ENCODE measurements at regions of chr2 and their contacts with region 1.

Region 1: DNA sequence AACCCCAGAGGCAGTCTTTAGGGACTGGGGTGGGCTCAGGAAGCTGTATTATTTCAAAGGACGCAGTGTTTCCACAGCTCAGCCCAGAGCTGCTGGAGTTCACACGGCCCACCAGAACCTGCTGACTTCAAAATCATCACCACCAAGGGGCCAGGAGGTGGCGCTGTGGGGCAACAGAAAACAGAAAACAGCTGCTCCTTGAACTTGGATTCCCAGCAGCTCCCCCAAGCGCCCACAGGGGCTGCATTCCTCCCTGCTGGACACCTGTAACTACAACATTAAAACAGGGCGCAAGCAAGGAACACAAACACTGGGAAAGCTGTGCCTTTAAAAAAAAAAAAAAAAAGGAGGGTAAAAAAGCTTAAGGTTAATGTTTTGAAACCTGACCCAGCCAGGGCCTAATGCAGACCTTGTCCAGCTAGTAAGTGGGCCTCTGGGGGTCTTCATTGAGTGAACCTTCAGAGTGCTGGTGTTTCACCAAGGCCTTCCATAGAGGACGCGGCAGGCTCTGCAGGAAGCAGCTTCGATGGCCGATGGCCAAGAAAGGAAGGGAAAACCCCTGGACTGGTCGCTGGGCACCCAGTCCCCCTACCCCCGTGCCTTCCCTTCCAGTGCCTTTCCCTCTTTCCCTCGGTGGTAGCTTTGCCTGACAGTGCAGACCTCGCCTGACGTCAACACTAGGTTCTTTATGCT is 25.9 kb downstream of the MLPH start:
- DNase-seq: peak; percentile 28
- ATAC-seq: peak; percentile 97
- H3K4me3 ChIP-seq: no peak overlapping the region
- H3K27ac ChIP-seq: no peak overlapping the region
- H3K4me1 ChIP-seq: no peaks in the 10 kb centered on the region
- H3K27me3 ChIP-seq: peaks cover 0 to 2% of the 10 kb centered on the region in 2 experiments; a peak in 2 of 4 replicates
- CTCF ChIP-seq: peak; percentile 85 to 99 (median 88); a peak in 5 of 6 replicates
- EP300 ChIP-seq: no peak
- POLR2A ChIP-seq: no peak
- RAD21 ChIP-seq: peak; percentile 96

Region 2: DNA sequence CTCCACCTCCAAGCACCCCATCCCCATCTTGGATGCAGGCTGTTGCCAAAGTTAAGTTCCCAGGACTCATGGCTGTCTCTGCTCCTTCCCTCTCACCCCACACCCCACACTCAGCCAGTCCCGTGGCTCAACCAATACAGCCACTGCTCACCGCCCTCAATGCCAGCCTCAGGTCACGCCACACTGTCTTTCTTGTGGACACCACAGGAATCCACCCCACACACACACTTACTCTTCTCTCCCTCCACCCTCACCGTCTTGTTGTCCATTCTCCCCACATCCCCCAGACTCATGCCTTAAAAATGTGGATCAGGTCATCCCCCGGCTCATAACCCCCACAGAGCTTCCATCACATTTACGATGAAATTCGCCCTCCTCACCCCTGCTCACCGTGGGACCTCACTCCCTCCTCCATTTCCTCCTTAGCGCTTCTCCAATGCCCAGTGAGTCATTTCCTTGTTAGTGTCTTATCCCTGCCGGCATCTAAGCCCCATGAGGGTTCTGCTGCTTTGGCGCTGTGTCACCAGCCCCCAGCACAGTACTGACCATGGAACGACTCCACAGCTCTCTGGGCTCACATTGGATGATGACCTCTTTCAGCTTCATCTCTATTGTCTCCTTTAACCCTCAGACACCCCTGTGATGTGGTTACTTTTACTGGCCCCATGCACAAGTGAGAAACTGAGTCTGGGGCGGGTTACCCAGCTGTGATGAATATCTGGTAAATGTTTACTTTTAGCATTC is 12.1 kb before region 1 on chr2:
- CTCF ChIA-PET with region 1: interaction called, 11 read pairs
- POLR2A ChIA-PET with region 1: interaction called, 3 read pairs
- RAD21 ChIA-PET with region 1: interaction called, 5 read pairs
- SMC1A ChIA-PET with region 1: interaction called, 4 read pairs
- in situ Hi-C with region 1: no loop called
- intact Hi-C with region 1: no loop called
- DNase-seq: no peak
- ATAC-seq: no peak
- H3K4me3 ChIP-seq: no peak overlapping the region
- H3K27ac ChIP-seq: no peak overlapping the region
- H3K4me1 ChIP-seq: no peaks in the 10 kb centered on the region
- H3K27me3 ChIP-seq: peaks cover 2 to 3% of the 10 kb centered on the region in 2 experiments; a peak in 3 of 4 replicates
- CTCF ChIP-seq: no peak
- EP300 ChIP-seq: no peak
- POLR2A ChIP-seq: no peak
- RAD21 ChIP-seq: no peak

Region 3: DNA sequence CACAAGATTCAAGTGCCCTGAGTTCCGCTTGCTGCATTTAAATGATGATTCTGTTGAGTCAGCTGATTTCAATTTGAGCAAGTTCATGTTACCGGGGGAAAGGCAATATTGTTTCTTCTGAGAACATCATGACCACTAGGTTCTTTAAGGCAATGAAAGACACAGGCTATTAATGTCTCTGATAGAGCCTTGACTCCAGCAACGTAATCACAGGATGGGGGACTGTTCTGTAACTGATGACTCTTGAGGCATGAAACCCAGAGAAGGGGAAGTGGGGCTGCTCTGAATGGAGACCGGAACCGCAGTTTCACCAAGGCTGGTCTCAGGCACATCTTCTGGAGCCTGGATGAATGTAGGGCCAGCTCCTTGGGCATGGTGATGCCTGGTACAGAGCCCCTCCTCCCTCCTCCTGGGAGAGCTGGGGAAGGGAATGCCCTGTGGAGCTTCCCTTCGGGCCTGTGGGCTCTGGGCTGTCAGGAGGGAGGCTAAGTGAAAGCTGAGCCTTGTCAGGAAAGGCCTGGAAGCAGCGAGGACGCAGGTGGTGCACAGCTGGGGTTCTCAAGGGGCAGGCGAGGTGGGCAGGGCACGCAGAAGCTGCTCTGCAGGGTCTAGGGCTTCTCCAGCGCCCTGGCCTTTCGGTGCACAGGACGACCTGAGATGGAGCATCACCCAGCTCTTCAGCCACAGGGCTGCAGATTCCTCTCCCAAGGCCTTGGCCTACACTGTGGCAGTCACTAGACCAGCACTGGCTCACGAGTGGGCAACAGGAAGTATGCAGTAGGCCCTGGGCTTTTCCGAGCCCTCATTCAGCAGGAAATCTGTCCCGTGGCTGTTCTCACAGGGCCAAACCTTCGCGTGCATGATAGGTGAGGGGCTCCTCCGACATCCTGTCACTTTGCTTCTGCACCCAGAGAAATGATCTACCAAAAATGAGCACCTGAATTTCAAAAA is 16.8 kb after region 1 on chr2:
- CTCF ChIA-PET with region 1: interaction called, 14 read pairs
- POLR2A ChIA-PET with region 1: interaction called, 3 read pairs
- RAD21 ChIA-PET with region 1: interaction called, 8 read pairs
- SMC1A ChIA-PET with region 1: interaction called, 14 read pairs
- in situ Hi-C with region 1: no loop called
- intact Hi-C with region 1: no loop called
- DNase-seq: peak; percentile 73
- ATAC-seq: peak; percentile 98
- H3K4me3 ChIP-seq: no peak overlapping the region
- H3K27ac ChIP-seq: 0 out of 2 replicates have a peak overlapping the region, but pooled peaks have one; percentile 13
- H3K4me1 ChIP-seq: peaks cover 21% of the 10 kb centered on the region
- H3K27me3 ChIP-seq: no peaks in the 10 kb centered on the region
- CTCF ChIP-seq: no peak
- EP300 ChIP-seq: peak in 1 of 2 experiments; percentile 37; a peak in 1 of 4 replicates
- POLR2A ChIP-seq: no peak
- RAD21 ChIP-seq: no peak

Region 4: DNA sequence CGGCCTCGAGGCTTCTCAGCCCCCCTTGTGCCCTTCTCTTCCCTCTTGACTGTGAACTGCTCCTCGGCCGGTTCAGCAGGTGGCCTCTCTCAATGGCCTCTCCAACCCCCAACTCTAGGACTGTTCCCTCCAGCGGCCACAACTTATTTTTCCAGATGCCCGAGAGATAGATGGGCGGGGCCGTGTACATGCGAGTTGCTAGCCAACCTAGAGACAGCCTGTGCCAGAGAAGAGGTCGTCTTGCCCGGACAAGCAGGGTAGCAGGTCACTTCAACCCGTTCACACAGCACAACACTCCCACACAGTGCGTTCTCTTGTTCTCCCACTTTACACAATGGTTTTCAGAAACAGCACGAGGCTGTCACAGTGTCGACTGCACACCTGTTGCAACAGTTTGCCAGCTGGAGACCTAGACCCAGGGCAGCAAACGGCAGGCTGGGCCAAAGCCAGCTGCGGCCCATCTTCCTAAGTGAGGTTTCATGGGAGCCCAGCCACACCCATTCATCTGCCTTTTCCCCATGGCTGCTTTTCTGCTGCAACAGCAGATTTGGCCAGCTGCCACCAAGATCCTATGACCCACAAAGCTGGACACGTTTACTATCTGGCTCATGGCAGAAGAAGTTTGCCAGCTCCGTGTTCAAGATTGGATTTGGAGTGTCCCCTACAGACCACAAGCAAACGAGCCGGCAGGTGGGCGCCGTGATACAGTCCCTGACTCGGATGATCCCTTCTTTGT is 46.2 kb after region 1 on chr2:
- CTCF ChIA-PET with region 1: interaction called, 35 read pairs
- POLR2A ChIA-PET with region 1: no interaction called
- RAD21 ChIA-PET with region 1: interaction called, 17 read pairs
- SMC1A ChIA-PET with region 1: interaction called, 21 read pairs
- in situ Hi-C with region 1: no loop called
- intact Hi-C with region 1: loop called (anchors 5 kb)
- DNase-seq: no peak
- ATAC-seq: no peak
- H3K4me3 ChIP-seq: no peak overlapping the region
- H3K27ac ChIP-seq: no peak overlapping the region
- H3K4me1 ChIP-seq: peaks cover 19% of the 10 kb centered on the region
- H3K27me3 ChIP-seq: no peaks in the 10 kb centered on the region
- CTCF ChIP-seq: no peak
- EP300 ChIP-seq: no peak
- POLR2A ChIP-seq: no peak
- RAD21 ChIP-seq: no peak

Region 5: GRCh38 chr2:237674731-237675276 is 161.9 kb after region 1 on chr2:
- CTCF ChIA-PET with region 1: interaction called, 10 read pairs
- POLR2A ChIA-PET with region 1: interaction called, 4 read pairs
- RAD21 ChIA-PET with region 1: interaction called, 3 read pairs
- SMC1A ChIA-PET with region 1: interaction called, 7 read pairs
- in situ Hi-C with region 1: no loop called
- intact Hi-C with region 1: no loop called
- DNase-seq: peak; percentile 77
- ATAC-seq: peak; percentile 92
- H3K4me3 ChIP-seq: peak overlapping the region; percentile 10; the same call in 1 of the 2 replicates
- H3K27ac ChIP-seq: peak overlapping the region; percentile 62
- H3K4me1 ChIP-seq: peaks cover 52% of the 10 kb centered on the region
- H3K27me3 ChIP-seq: no peaks in the 10 kb centered on the region
- CTCF ChIP-seq: no peak
- EP300 ChIP-seq: peak; percentile 56 to 67; a peak in 3 of 4 replicates
- POLR2A ChIP-seq: no peak
- RAD21 ChIP-seq: no peak

Region 6: GRCh38 chr2:237774802-237775553 is 262.1 kb after region 1 on chr2:
- CTCF ChIA-PET with region 1: interaction called, 10 read pairs
- POLR2A ChIA-PET with region 1: no interaction called
- RAD21 ChIA-PET with region 1: interaction called, 3 read pairs
- SMC1A ChIA-PET with region 1: interaction called, 8 read pairs
- in situ Hi-C with region 1: no loop called
- intact Hi-C with region 1: no loop called
- DNase-seq: peak; percentile 11
- ATAC-seq: peak; percentile 99
- H3K4me3 ChIP-seq: no peak overlapping the region
- H3K27ac ChIP-seq: no peak overlapping the region
- H3K4me1 ChIP-seq: no peaks in the 10 kb centered on the region
- H3K27me3 ChIP-seq: no peaks in the 10 kb centered on the region
- CTCF ChIP-seq: peak; percentile 64 to 73 (median 71); a peak in 5 of 6 replicates
- EP300 ChIP-seq: no peak
- POLR2A ChIP-seq: 0 out of 2 replicates have a peak, but pooled peaks have one; percentile 33
- RAD21 ChIP-seq: peak; percentile 55